ENCODE measurements at regions of chr9 and their contacts with region 1.

Region 1: DNA sequence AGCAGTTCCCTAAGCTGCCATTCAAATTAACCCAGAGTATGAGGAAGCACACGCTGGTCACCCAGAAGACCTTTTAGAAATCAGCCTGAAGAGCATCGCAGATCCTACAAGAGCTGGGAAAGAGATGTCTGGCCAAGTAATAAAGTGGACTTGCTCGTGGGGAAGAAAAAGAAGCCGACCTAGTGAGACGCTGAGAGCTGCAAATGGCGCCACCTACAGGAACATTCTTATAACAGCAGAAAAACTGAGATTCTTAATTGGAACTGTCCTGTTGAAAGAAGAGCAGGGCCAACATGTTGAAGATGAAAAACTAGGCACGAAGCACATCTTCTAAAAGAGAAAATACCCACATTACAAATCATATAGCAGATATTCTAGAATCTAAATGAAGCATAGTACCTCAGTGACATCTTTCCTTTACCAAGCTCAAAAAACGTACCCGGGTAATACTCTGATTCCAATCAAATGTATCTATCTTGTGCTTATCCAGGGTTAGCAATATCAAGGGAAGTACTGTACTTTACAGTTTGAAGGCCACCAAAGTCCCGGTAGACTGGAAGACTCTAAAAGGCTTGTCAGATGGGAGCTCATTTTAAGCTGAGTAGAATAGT is 3.9 kb upstream of the GNAQ start:
- DNase-seq: peak in 1 of 2 donors; percentile 67
- H3K4me3 ChIP-seq: no peak overlapping the region
- H3K27ac ChIP-seq: peak overlapping the region; percentile 30 to 62
- H3K4me1 ChIP-seq: peaks cover 0 to 22% (median 6%) of the 10 kb centered on the region in 4 donors
- H3K27me3 ChIP-seq: no peaks in the 10 kb centered on the region
- CTCF ChIP-seq: peak; percentile 82 to 85

Region 2: DNA sequence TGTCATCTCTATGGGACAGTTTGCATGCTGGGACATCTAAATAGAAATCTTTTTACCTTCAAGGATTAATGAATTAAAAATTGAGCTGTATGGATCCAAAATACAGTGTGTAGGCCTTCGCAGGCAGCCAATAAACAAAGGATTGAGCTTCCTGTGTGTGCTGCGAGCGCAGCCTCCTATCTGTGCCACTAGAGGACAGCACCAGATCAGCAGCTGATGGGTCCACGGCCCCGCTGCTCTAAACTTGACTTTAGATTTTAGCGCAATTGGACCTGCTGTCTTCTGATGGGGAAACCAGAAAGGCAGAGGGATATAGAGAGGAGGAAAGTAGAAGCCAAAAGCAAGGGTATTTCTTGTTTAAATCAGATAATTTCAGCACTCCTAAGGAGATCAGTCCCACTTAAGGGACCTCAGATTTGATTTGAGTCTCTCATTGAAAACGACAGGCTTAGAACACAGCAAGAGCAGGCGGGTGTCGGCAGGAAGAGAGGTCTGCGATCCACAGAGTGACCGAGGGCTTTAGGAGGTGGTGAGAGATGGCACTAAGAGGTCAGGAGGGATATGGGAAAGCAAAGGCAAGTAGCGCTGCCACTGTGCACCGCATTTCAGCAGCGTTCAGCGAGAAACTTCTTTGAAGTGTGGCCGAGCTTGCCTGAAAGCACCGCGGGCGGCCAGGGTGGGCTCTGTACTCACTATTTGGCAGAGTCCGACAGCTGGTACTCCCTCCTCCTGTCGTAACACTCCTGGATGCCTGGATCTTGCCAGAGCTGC is 601.6 kb before region 1 on chr9:
- intact Hi-C with region 1: loop called (anchors 5 kb)
- DNase-seq: peak in 1 of 2 donors; percentile 60
- H3K4me3 ChIP-seq: no peak overlapping the region
- H3K27ac ChIP-seq: no peak overlapping the region
- H3K4me1 ChIP-seq: no peaks in the 10 kb centered on the region
- H3K27me3 ChIP-seq: no peaks in the 10 kb centered on the region
- CTCF ChIP-seq: peak; percentile 75 to 94

Region 3: GRCh38 chr9:77848897-77849296 is 186.6 kb before region 1 on chr9:
- intact Hi-C with region 1: loop called (anchors 5 kb)
- DNase-seq: peak; percentile 92
- H3K4me3 ChIP-seq: no peak overlapping the region
- H3K27ac ChIP-seq: peak overlapping the region; percentile 72 to 82
- H3K4me1 ChIP-seq: peaks cover 0 to 68% (median 55%) of the 10 kb centered on the region in 4 donors
- H3K27me3 ChIP-seq: no peaks in the 10 kb centered on the region
- CTCF ChIP-seq: no peak